CD8-positive, alpha-beta memory T cell (primary cell): ENCODE measurements at regions of chr9 and their contacts with region 1.

Region 1: DNA sequence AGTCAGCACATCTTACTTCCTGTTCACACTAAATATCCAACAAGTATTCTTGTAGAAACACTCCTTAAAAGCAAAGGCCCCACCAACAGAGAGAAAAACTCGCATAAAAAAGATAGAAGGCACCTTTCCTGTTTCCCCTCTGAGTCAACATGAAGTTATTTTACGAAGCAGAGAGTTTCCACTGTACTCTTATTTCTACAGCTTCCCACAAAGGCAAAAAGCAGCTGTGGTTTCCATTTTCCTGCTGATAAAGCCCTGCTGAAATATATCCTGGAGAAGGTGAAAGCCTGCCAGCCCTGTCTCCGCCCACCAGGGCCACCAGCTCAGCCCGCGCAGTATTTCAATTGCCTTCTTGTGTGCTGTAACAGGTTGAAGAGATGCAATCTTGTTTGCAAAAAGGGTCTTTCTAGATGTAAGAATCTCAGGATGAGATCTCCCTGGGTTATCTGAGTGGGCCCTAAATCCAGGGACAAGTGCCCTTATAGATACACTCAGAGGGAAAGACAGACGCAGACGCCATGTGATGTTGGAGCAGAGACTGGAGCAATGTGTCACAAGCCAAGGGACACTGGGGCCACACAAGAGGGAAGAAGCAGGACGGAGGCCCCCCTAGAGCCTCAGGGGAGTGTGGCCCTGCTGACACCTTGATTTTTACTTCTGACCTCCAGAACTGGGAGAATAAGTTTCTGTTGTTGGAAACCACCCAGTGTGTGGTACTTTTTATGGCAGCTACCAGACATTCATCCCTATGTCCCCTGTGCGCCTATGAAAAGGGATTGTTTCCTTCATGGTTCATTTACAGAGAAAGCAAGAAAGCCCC is 19.9 kb downstream of the SEMA4D start:
- DNase-seq: peak in 3 of 5 donors; percentile 33 to 72 (median 67)
- H3K4me3 ChIP-seq: peak overlapping the region; percentile 62
- H3K4me3 Mint-ChIP-seq: peak overlapping the region; percentile 85 to 98 (median 95)
- H3K27ac ChIP-seq: no peak overlapping the region
- H3K27ac Mint-ChIP-seq: peak overlapping the region; percentile 90 to 99 (median 96)
- H3K4me1 ChIP-seq: peaks cover 86% of the 10 kb centered on the region
- H3K4me1 Mint-ChIP-seq: peaks cover 88 to 96% (median 90%) of the 10 kb centered on the region in 3 donors
- H3K27me3 ChIP-seq: no peaks in the 10 kb centered on the region
- H3K27me3 Mint-ChIP-seq: no peaks in the 10 kb centered on the region

Region 2: GRCh38 chr9:89437000-89437631 is 40.9 kb before region 1 on chr9:
- CTCF ChIA-PET with region 1: no interaction called
- POLR2A ChIA-PET with region 1: no interaction called
- DNase-seq: peak; percentile 60 to 85 (median 67)
- H3K4me3 ChIP-seq: peak overlapping the region; percentile 45
- H3K4me3 Mint-ChIP-seq: peak overlapping the region; percentile 69 to 86 (median 76)
- H3K27ac ChIP-seq: peak overlapping the region; percentile 55
- H3K27ac Mint-ChIP-seq: peak overlapping the region; percentile 91 to 99 (median 97)
- H3K4me1 ChIP-seq: peaks cover 92% of the 10 kb centered on the region
- H3K4me1 Mint-ChIP-seq: peaks cover 86 to 97% (median 91%) of the 10 kb centered on the region in 3 donors
- H3K27me3 ChIP-seq: no peaks in the 10 kb centered on the region
- H3K27me3 Mint-ChIP-seq: no peaks in the 10 kb centered on the region

Region 3: GRCh38 chr9:89466451-89467277 is 11.4 kb before region 1 on chr9:
- CTCF ChIA-PET with region 1: interaction called, 8 read pairs
- POLR2A ChIA-PET with region 1: interaction called, 14 read pairs
- DNase-seq: peak in 1 of 5 donors; percentile 71
- H3K4me3 ChIP-seq: peak overlapping the region; percentile 33
- H3K4me3 Mint-ChIP-seq: peak overlapping the region; percentile 40 to 89 (median 79)
- H3K27ac ChIP-seq: peak overlapping the region; percentile 35
- H3K27ac Mint-ChIP-seq: peak overlapping the region; percentile 89 to 97 (median 95)
- H3K4me1 ChIP-seq: peaks cover 99% of the 10 kb centered on the region
- H3K4me1 Mint-ChIP-seq: peaks cover 96 to 99% (median 98%) of the 10 kb centered on the region in 3 donors
- H3K27me3 ChIP-seq: no peaks in the 10 kb centered on the region
- H3K27me3 Mint-ChIP-seq: peaks cover 0 to 2% of the 10 kb centered on the region in 2 donors

Region 4: GRCh38 chr9:89489548-89490530 is 11.8 kb after region 1 on chr9:
- CTCF ChIA-PET with region 1: interaction called, 7 read pairs
- POLR2A ChIA-PET with region 1: interaction called, 16 read pairs
- DNase-seq: peak in 2 of 5 donors; percentile 79 to 81
- H3K4me3 ChIP-seq: peak overlapping the region; percentile 9
- H3K4me3 Mint-ChIP-seq: peak overlapping the region; percentile 33 to 94 (median 66)
- H3K27ac ChIP-seq: no peak overlapping the region
- H3K27ac Mint-ChIP-seq: peak overlapping the region; percentile 16 to 96 (median 88)
- H3K4me1 ChIP-seq: peaks cover 93% of the 10 kb centered on the region
- H3K4me1 Mint-ChIP-seq: peaks cover 92 to 98% (median 98%) of the 10 kb centered on the region in 3 donors
- H3K27me3 ChIP-seq: no peaks in the 10 kb centered on the region
- H3K27me3 Mint-ChIP-seq: no peaks in the 10 kb centered on the region